Activated T-helper 2 cell treated with anti-CD3 and anti-CD28 coated beads, Interferon-gamma antibody, Interleukin-2, Interleukin-4, amounts not matched to agents 10 μg/mL and 5 μg/mL and 100 μg/mL, durations not matched to agents 14 hours and 24 hours and 36 hours (primary cell): ENCODE measurements at regions of chr18 and their contacts with region 1.

Region 1: GRCh38 chr18:23629444-23629946 is 33.2 kb downstream of the ANKRD29 start:
- DNase-seq: no peak
- H3K4me3 Mint-ChIP-seq: no peak overlapping the region
- H3K27ac Mint-ChIP-seq: no peak overlapping the region
- H3K4me1 Mint-ChIP-seq: peaks cover 16% of the 10 kb centered on the region
- H3K27me3 Mint-ChIP-seq: peaks cover 10% of the 10 kb centered on the region

Region 2: GRCh38 chr18:23662309-23663263 is 33.1 kb after region 1 on chr18 and contains the start of gene ANKRD29:
- intact Hi-C with region 1: loop called (anchors 5 kb)
- DNase-seq: peak; percentile 54
- H3K4me3 Mint-ChIP-seq: peak within 1 kb of the TSS; percentile 82
- H3K27ac Mint-ChIP-seq: peak within 1 kb of the TSS; percentile 9
- H3K4me1 Mint-ChIP-seq: peaks cover 17% of the 10 kb centered on the region
- H3K27me3 Mint-ChIP-seq: peaks cover 69% of the 10 kb centered on the region
- total RNA-seq, gene ANKRD29: not detected in 2 replicates